Dendritic cell treated with granulocyte-macrophage colony-stimulating factor and Interleukin-4, amounts not matched to agents 40 ng/mL and 50 ng/mL, for 4 days (primary cell): ENCODE measurements at regions of chr6 and their contacts with region 1.

Region 1: GRCh38 chr6:108541838-108542759 is 18.6 kb upstream of the FOXO3 start:
- H3K4me3 Mint-ChIP-seq: no peak overlapping the region
- H3K27ac Mint-ChIP-seq: no peak overlapping the region
- H3K4me1 Mint-ChIP-seq: peaks cover 26% of the 10 kb centered on the region
- H3K27me3 Mint-ChIP-seq: peaks cover 13% of the 10 kb centered on the region

Region 2: GRCh38 chr6:108453597-108454185 is 88.4 kb before region 1 on chr6:
- intact Hi-C with region 1: no loop called
- H3K4me3 Mint-ChIP-seq: no peak overlapping the region
- H3K27ac Mint-ChIP-seq: peak overlapping the region; percentile 66
- H3K4me1 Mint-ChIP-seq: peaks cover 10% of the 10 kb centered on the region
- H3K27me3 Mint-ChIP-seq: no peaks in the 10 kb centered on the region

Region 3: GRCh38 chr6:108805611-108806167 is 263.6 kb after region 1 on chr6:
- intact Hi-C with region 1: no loop called
- H3K4me3 Mint-ChIP-seq: no peak overlapping the region
- H3K27ac Mint-ChIP-seq: peak overlapping the region; percentile 29
- H3K4me1 Mint-ChIP-seq: peaks cover 12% of the 10 kb centered on the region
- H3K27me3 Mint-ChIP-seq: peaks cover 4% of the 10 kb centered on the region

Region 4: DNA sequence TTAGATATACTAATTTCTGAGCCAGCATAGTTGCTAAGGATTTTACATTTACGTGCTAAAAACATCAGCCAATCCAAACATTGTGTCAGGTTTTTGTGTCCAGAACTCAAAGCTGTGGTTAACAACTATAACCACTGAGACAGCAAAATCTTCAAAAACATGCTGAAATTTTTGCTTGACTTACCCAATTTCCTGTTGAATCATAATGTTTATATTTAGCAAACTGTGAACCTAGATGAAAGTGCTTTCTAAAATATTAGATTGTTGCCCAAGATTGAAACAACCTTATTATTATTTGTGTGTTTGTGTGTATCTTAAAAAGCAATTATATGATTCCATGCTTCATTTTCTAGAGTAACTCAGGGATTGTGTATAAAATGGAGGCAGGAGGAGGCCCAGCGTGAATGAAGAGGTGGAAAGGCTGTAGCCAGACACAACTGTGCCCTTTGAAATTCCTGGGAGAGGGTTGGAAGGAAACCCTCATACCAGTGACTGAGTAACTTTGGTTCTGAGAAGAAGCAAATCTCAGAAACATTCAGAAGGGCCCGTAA is 354.1 kb after region 1 on chr6:
- intact Hi-C with region 1: loop called (anchors 1 kb)
- H3K4me3 Mint-ChIP-seq: no peak overlapping the region
- H3K27ac Mint-ChIP-seq: peak overlapping the region; percentile 76
- H3K4me1 Mint-ChIP-seq: peaks cover 26% of the 10 kb centered on the region
- H3K27me3 Mint-ChIP-seq: peaks cover 7% of the 10 kb centered on the region